Activated naive CD8-positive, alpha-beta T cell treated with anti-CD3 and anti-CD28 coated beads, Interleukin-2, amount 10 ng/mL, durations not matched to agents 7 days and 5 days (primary cell): ENCODE measurements at regions of chr6 and their contacts with region 1.

Region 1: GRCh38 chr6:149545754-149546528 is at the start of gene PPIL4:
- DNase-seq: peak; percentile 98
- ATAC-seq: peak; percentile 86
- H3K4me3 Mint-ChIP-seq: peak within 1 kb of the TSS; percentile 94
- H3K27ac Mint-ChIP-seq: peak within 1 kb of the TSS; percentile 97
- H3K4me1 Mint-ChIP-seq: peaks cover 26% of the 10 kb centered on the region
- H3K27me3 Mint-ChIP-seq: peaks cover 3% of the 10 kb centered on the region
- total RNA-seq, gene PPIL4: 24.2 to 24.9 TPM

Region 2: GRCh38 chr6:149473080-149474052 is 72.6 kb before region 1 on chr6:
- POLR2A ChIA-PET with region 1: no interaction called
- DNase-seq: no peak
- ATAC-seq: peak; percentile 45
- H3K4me3 Mint-ChIP-seq: no peak overlapping the region
- H3K27ac Mint-ChIP-seq: no peak overlapping the region
- H3K4me1 Mint-ChIP-seq: peaks cover 25% of the 10 kb centered on the region
- H3K27me3 Mint-ChIP-seq: no peaks in the 10 kb centered on the region

Region 3: GRCh38 chr6:149493761-149494320 is 52.1 kb before region 1 on chr6:
- POLR2A ChIA-PET with region 1: no interaction called
- DNase-seq: no peak
- ATAC-seq: no peak
- H3K4me3 Mint-ChIP-seq: no peak overlapping the region
- H3K27ac Mint-ChIP-seq: no peak overlapping the region
- H3K4me1 Mint-ChIP-seq: peaks cover 35% of the 10 kb centered on the region
- H3K27me3 Mint-ChIP-seq: no peaks in the 10 kb centered on the region

Region 4: DNA sequence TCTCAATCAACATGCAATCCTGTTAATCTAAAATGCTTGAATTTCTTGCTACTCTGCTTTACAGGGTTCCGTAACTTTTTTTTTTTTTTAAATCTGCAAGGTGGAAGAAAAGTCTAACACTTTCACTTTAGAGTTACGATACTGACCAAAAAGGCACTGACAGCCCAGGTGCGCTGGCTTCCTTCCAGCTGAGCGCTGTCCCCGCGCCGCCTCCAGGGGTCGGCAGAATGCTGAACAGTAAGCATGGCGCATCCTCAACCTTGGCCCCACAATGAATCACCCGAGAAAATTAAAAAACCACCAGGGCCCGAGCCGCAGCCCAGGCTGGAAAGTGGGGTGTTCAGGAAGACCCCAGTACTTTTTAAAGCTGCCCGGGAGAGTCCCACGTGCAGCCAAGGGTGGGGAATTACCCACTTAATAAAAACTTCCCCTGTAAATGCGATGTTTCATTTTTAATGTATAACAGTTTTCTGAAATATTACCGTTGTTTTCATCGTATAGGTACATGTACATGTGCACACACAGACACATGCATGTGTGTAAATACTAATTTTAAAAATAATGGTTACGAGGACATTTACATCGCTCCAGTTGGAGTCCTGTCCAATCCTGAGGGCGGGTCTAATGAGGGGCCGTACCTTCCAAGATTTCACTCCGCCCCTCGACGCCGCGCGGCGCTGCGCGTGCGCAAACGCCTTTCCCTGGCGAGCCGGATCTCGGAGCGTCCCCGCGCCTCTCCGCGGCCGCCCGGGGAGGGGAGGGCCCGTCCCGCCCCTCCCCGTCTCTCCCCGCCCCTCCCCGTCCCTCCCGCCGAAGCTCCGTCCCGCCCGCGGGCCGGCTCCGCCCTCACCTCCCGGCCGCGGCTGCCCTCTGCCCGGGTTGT is 19.8 kb after region 1 on chr6 and contains the start of gene GINM1:
- POLR2A ChIA-PET with region 1: interaction called, 23 read pairs
- DNase-seq: peak; percentile 99
- ATAC-seq: peak; percentile 85
- H3K4me3 Mint-ChIP-seq: peak within 1 kb of the TSS; percentile 94
- H3K27ac Mint-ChIP-seq: peak within 1 kb of the TSS; percentile 94
- H3K4me1 Mint-ChIP-seq: peaks cover 12% of the 10 kb centered on the region
- H3K27me3 Mint-ChIP-seq: peaks cover under 1% of the 10 kb centered on the region
- total RNA-seq, gene GINM1: 21.9 to 22.8 TPM

Region 5: DNA sequence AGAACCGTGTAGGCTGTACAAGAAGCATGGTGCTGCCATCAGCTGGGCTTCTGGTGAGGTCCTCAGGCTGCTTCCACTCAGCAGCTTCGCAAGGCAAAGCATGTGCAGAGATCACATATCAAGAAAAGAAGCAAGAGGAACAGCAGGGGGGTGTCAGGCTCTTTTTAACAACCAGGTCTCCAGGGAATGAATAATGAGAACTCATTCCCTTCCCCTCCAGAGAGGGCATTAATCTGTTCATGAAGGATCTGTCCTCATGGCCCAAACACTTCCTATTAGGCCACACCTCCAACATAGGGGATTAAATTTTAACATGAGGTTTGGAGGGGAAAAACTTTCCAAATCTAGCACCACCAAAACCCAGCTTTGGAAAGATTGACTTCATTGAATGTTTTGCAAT is 40.2 kb after region 1 on chr6:
- POLR2A ChIA-PET with region 1: no interaction called
- DNase-seq: no peak
- ATAC-seq: no peak
- H3K4me3 Mint-ChIP-seq: no peak overlapping the region
- H3K27ac Mint-ChIP-seq: no peak overlapping the region
- H3K4me1 Mint-ChIP-seq: no peaks in the 10 kb centered on the region
- H3K27me3 Mint-ChIP-seq: no peaks in the 10 kb centered on the region

Region 6: DNA sequence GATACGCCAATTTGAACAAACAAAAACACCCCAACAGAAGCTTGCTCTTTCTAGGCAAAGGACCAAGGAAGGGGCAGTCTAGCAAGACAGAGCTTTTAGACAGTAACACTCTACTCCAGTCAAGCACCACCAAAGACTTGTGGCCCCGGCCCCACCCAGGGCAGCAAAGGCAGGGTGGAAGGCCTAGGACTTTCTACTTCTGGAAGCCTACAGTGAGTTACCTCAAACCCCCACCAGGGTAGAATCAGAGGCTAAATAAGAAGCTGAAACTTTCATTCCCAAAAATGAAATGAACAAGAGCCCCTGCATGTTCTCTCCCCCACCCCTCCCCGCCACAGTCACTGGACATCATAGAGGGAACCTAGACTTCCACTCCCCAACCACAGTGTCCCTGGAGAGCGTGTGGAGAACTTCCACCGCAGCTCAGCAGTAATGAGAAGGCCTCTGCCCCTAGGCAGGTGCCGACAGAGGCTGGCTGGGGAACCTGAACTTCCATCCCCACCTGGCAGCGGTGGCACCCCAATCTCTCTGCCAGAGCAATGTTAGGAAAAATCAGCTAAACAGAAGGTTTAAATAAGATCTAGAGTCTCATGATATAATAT is 62.5 kb after region 1 on chr6:
- POLR2A ChIA-PET with region 1: no interaction called
- DNase-seq: no peak
- ATAC-seq: no peak
- H3K4me3 Mint-ChIP-seq: peak overlapping the region; percentile 60
- H3K27ac Mint-ChIP-seq: peak overlapping the region; percentile 67
- H3K4me1 Mint-ChIP-seq: peaks cover 10% of the 10 kb centered on the region
- H3K27me3 Mint-ChIP-seq: no peaks in the 10 kb centered on the region